Prostate gland (tissue), 2 donors: ENCODE measurements at regions of chr14 and their contacts with region 1.

Region 1: DNA sequence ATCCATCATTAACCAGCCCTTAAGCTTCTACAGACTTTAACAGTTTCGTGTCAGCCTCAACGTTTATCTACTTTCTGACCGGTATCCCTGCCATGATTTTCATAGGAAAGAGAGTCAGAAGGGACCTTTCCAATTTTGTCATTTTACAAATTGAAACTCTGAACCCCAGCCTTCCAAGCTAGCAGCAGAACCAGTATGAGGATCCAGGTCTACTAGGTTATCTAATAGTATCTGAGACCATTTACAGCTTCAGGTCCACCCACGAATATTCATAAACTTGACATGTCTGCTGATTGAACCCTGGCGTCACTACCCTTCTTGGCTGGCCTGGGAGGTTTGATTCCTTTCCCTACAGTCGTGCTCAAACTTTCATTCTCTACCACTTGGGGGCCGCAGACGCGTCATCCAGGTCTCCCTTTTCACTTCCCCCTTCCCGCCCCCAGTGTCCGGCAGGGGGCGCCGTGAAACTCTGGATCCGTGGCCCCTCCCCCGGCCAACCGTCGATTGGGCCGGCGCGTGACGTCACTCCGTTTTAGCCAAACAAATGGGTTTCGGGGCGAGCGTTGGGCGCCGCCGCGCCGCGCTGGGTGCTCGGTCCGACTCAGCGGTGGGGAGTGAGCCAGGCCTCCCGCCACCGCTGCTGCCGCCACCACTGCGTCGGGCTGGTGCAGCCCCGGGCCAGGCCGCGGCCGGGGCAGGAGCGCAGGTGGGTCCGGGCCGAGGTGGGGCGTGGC is at the start of gene FBXO34:
- DNase-seq: peak; percentile 99
- H3K4me3 ChIP-seq: peak within 1 kb of the TSS; percentile 96 to 97
- H3K27ac ChIP-seq: peak within 1 kb of the TSS; percentile 91 to 93
- H3K4me1 ChIP-seq: peaks cover 4% of the 10 kb centered on the region
- H3K27me3 ChIP-seq: no peaks in the 10 kb centered on the region
- CTCF ChIP-seq: peak; percentile 100
- POLR2A ChIP-seq: peak; percentile 97
- total RNA-seq, gene FBXO34: 37.8 to 73.3 TPM

Region 2: DNA sequence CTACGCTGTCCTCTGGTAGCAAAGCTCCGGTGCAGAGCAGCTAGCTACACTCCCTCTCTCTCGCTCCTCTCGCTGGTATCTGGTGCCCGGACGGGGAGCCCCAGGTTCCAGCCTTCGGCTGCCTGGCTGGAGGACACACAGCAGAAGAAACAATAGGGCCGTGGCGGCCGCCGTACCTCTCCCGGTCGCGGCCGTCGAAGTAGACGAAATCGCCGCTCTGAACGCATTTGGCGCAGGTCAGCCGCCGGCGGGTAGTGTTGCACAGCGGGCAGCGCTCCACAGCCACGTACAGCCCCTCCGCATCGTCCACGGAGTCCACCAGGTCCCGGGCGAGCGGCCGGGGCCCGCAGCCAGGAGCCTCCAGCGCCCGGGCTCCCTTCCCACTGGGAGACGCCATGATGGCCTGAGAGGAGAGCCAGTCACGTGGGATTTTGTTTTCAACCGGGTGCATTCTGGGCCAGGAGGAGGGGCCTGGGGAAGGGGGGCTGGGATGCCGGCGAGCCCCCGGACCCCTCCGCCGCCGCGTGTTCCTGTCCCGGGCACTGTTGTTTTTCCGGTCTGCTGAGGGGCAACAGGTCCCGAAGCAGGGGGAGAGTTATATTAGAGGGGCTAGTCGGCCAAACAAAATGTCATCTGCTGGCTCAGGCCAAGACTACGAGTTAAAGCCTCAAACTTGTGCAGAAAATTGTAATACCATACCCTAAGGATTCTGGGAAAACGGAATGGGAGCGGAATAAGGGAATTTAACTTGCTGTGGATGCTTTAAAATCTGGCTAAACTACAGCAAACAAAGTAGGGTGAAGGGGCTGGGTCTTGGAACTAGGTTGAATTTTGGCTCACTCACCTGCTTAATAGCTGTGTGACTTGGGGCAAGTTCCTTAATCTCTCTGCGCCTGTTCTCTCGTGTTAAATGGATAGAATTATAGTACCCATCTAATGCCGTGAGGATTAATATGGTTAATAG is 140.7 kb after region 1 on chr14 and contains the start of gene ATG14:
- intact Hi-C with region 1: loop called (anchors 10 kb)
- DNase-seq: peak; percentile 89
- H3K4me3 ChIP-seq: peak within 1 kb of the TSS; percentile 68 to 99
- H3K27ac ChIP-seq: peak within 1 kb of the TSS; percentile 79 to 86
- H3K4me1 ChIP-seq: no peaks in the 10 kb centered on the region
- H3K27me3 ChIP-seq: no peaks in the 10 kb centered on the region
- CTCF ChIP-seq: peak in 1 of 4 experiments; percentile 20
- POLR2A ChIP-seq: peak; percentile 67
- total RNA-seq, gene ATG14: 12.5 to 21.9 TPM